Posterior vena cava (tissue), 2 donors: ENCODE measurements at regions of chr10 and their contacts with region 1.

Region 1: GRCh38 chr10:104657457-104657856 is 16.4 kb downstream of the SORCS3 start:
- DNase-seq: no peak

Region 2: GRCh38 chr10:104642658-104643302 is 14.7 kb before region 1 on chr10:
- intact Hi-C with region 1: loop called in 1 of 2 experiments (anchors 1 kb)
- DNase-seq: peak; percentile 83

Region 3: GRCh38 chr10:104688251-104688650 is 30.8 kb after region 1 on chr10:
- intact Hi-C with region 1: no loop called
- DNase-seq: no peak

Region 4: GRCh38 chr10:105650306-105650705 is 992.8 kb after region 1 on chr10:
- intact Hi-C with region 1: no loop called
- DNase-seq: no peak